A549 (cell line): ENCODE measurements at regions of chr11 and their contacts with region 1.

Region 1: GRCh38 chr11:7665473-7666291 is 7.6 kb downstream of the CYB5R2 start:
- DNase-seq: peak; percentile 85 to 92
- ATAC-seq: peak; percentile 94 to 99
- H3K4me3 ChIP-seq: no peak overlapping the region
- H3K27ac ChIP-seq: peak overlapping the region in 1 of 2 experiments; percentile 60; a peak in 3 of 6 replicates
- H3K4me1 ChIP-seq: peaks cover 4% of the 10 kb centered on the region; the same call in 2 of the 3 replicates
- CTCF ChIP-seq: peak; percentile 83
- EP300 ChIP-seq: no peak
- POLR2A ChIP-seq: no peak
- RAD21 ChIP-seq: peak; percentile 93 to 96

Region 2: GRCh38 chr11:7353100-7353499 is 312.6 kb before region 1 on chr11:
- CTCF ChIA-PET with region 1: interaction called, 10 read pairs
- POLR2A ChIA-PET with region 1: no interaction called
- DNase-seq: peak; percentile 29 to 43
- ATAC-seq: peak; percentile 74 to 89; a peak in 4 of 6 replicates
- H3K4me3 ChIP-seq: no peak overlapping the region
- H3K27ac ChIP-seq: no peak overlapping the region
- H3K4me1 ChIP-seq: no peaks in the 10 kb centered on the region
- CTCF ChIP-seq: peak; percentile 53
- EP300 ChIP-seq: no peak
- POLR2A ChIP-seq: no peak
- RAD21 ChIP-seq: peak; percentile 55 to 59

Region 3: GRCh38 chr11:7422544-7423331 is 242.9 kb before region 1 on chr11:
- CTCF ChIA-PET with region 1: no interaction called
- POLR2A ChIA-PET with region 1: no interaction called
- DNase-seq: no peak
- ATAC-seq: peak; percentile 42 to 45; a peak in 3 of 6 replicates
- H3K4me3 ChIP-seq: no peak overlapping the region
- H3K27ac ChIP-seq: no peak overlapping the region
- H3K4me1 ChIP-seq: no peaks in the 10 kb centered on the region
- CTCF ChIP-seq: no peak
- EP300 ChIP-seq: no peak
- POLR2A ChIP-seq: no peak
- RAD21 ChIP-seq: no peak

Region 4: DNA sequence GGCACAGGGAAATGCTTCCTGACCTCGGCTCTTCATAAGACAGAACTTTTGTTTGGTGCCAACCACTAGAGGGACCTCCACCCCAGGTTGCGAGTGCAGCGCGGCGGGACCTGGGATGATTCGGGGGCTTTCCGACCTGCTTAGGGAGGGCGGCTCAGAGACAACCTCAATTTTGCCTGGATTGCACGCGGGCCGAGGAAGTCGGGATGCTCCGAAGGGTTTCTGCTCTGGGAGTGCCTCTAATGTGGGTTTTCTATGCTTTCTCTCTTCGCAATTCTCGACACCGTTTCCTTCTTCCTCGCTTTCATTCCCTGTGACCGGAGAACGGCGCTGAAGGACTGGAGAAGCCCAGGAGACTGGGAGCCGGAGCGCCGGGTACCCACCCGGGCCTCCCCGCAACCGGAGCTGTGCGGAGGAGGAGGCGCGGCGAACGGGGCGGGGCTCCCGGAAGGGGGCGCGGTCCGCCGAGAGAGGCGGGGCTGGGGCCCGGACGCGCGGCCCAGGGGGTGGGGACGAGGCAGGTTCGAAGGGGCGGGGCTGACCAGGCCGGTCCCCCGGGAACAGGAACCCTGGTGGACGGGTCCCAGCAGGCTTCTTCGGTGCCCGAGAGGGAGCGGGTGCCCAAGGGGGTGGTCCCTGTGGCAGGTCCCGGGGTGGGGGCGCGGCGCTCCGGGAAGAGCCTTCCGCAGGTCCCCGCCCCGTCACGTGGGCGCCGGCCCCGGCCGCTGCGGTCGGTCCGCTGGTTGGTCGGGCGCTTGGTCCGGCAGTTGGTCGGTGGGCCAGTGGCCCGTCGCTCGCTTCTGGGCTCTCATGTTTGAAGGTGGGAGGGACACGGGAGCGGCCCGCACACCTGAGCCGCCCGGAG is 152.2 kb before region 1 on chr11 and contains the start of gene PPFIBP2:
- CTCF ChIA-PET with region 1: interaction called, 76 read pairs
- POLR2A ChIA-PET with region 1: no interaction called
- DNase-seq: peak; percentile 73 to 90
- ATAC-seq: peak; percentile 92 to 96
- H3K4me3 ChIP-seq: peak within 1 kb of the TSS; percentile 76
- H3K27ac ChIP-seq: peak within 1 kb of the TSS; percentile 75 to 92
- H3K4me1 ChIP-seq: 0 out of 3 replicates have a peak, but pooled peaks cover 6% of the 10 kb centered on the region
- CTCF ChIP-seq: peak; percentile 90
- EP300 ChIP-seq: no peak
- POLR2A ChIP-seq: no peak
- RAD21 ChIP-seq: peak; percentile 71 to 79
- polyA plus RNA-seq, gene PPFIBP2: 32.5 and 58.4 TPM in 2 replicates

Region 5: DNA sequence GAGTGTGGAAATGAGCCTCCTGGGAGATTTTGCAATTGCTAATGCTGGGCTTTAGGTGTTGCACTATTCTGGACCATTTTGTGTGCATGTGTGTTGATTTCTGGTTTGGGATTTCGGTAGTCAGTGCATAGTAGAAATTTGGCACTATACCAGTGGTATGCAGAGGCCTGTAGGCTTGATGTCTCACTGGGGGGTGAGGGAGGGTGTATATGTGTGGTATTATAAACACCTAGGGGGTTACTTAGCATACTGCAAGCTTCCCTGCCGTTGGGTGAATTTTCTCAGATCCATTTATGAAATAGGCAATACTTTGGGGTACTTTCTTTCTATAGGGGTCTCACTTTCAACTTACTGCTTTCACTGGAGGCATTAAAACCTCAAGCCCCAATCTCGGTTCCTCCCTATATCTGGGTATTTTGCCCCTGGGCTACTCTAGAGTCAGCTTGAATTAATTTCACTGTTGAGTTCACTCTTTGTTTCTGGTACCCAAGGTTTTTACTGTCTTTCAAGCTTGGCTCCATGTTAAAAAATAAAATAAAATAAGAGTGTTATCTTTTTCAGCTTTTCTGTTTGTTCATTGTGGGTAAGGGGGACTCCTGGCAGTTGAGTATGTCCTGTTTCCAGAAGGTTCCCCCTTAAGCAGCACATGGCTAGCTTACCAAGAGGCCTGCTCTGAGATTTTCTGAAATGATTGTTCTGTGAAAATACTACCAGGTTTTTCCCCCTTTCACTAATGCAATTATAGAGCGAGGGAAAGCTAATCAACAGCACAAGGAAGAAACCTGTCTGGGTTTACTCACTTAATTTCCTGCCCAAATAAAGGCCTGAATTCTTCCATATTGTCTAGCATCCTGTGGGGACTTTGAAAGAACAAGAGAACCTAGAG is 106.0 kb before region 1 on chr11:
- CTCF ChIA-PET with region 1: interaction called, 12 read pairs
- POLR2A ChIA-PET with region 1: no interaction called
- DNase-seq: no peak
- ATAC-seq: no peak
- H3K4me3 ChIP-seq: no peak overlapping the region
- H3K27ac ChIP-seq: no peak overlapping the region
- H3K4me1 ChIP-seq: no peaks in the 10 kb centered on the region
- CTCF ChIP-seq: no peak
- EP300 ChIP-seq: no peak
- POLR2A ChIP-seq: no peak
- RAD21 ChIP-seq: no peak

Region 6: GRCh38 chr11:7651140-7651551 is 14.5 kb before region 1 on chr11:
- CTCF ChIA-PET with region 1: interaction called, 34 read pairs
- POLR2A ChIA-PET with region 1: no interaction called
- DNase-seq: no peak
- ATAC-seq: no peak
- H3K4me3 ChIP-seq: no peak overlapping the region
- H3K27ac ChIP-seq: no peak overlapping the region
- H3K4me1 ChIP-seq: 0 out of 3 replicates have a peak, but pooled peaks cover 3% of the 10 kb centered on the region
- CTCF ChIP-seq: no peak
- EP300 ChIP-seq: no peak
- POLR2A ChIP-seq: no peak
- RAD21 ChIP-seq: no peak

Region 7: GRCh38 chr11:7696424-7696823 is 30.7 kb after region 1 on chr11:
- CTCF ChIA-PET with region 1: interaction called, 13 read pairs
- POLR2A ChIA-PET with region 1: no interaction called
- DNase-seq: no peak
- ATAC-seq: no peak
- H3K4me3 ChIP-seq: no peak overlapping the region
- H3K27ac ChIP-seq: no peak overlapping the region
- H3K4me1 ChIP-seq: no peaks in the 10 kb centered on the region
- CTCF ChIP-seq: no peak
- EP300 ChIP-seq: no peak
- POLR2A ChIP-seq: no peak
- RAD21 ChIP-seq: no peak

Region 8: DNA sequence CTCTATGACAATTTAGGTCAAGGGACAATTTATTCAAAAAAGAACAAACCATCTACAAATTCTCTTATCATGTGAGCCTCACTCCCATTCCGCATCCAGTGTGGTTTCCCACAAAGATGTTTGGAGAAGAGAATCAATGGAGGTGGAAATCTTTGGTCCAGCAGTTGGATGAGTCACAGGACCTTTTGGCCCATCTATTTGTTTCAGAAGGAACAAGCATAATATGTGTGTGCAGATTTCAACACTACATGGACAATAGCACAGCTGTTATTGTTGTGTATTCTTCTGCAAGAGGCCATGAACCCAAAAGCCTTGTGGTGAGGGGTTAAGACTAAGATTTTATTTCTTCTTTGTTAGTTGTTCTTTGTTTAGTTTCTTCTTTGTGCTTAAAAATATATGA is 203.8 kb after region 1 on chr11:
- CTCF ChIA-PET with region 1: no interaction called
- POLR2A ChIA-PET with region 1: no interaction called
- DNase-seq: no peak
- ATAC-seq: no peak
- H3K4me3 ChIP-seq: no peak overlapping the region
- H3K27ac ChIP-seq: no peak overlapping the region
- H3K4me1 ChIP-seq: no peaks in the 10 kb centered on the region
- CTCF ChIP-seq: no peak
- EP300 ChIP-seq: no peak
- POLR2A ChIP-seq: no peak
- RAD21 ChIP-seq: no peak